SK-N-SH (cell line): ENCODE measurements at regions of chr1 and their contacts with region 1.

Region 1: DNA sequence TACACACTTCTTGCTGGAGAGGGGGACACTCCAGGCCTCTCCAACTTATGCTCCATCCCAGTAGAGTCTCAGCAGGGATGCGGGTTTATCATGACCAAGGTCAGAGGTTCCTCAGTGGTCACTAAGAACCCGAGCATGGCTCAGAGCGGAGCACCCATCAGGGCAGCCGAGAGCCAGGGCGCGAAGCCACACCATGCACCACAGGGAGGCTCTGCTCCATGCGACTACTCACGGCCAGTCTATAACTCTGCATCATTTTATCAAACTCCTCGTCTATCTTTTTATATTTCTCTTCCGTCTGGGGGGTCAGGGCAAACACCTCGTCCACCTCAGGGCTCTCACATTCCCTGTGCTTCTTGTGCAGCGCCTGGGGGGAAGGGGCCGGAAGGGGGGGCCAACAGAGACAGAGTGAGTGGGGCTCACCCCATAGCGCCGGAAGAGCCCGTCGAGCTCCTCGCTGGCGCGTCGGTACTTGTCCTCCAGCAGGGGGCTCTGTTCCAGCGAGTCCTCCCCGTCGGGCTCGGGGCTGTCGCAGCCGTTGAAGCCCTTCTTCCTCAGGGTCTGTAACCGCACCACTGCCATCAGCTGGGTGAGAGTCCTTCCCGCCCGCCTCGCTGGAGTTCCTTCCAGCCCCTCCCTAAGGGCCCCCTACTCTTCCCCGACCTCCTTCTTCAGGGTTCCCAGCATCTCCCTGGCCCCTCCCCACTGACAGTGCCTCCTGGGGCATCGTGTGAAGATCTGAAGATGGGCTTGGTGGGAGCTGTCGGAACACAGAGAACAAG is 20.0 kb downstream of the MEF2D start:
- DNase-seq: peak; percentile 84
- H3K4me3 ChIP-seq: peak overlapping the region in 1 of 2 experiments; percentile 35; a peak in 1 of 4 replicates
- H3K27ac ChIP-seq: no peak overlapping the region
- H3K4me1 ChIP-seq: peaks cover 0 to 5% of the 10 kb centered on the region in 2 experiments; a peak in 1 of 4 replicates
- H3K27me3 ChIP-seq: no peaks in the 10 kb centered on the region
- CTCF ChIP-seq: peak; percentile 70
- EP300 ChIP-seq: no peak
- RAD21 ChIP-seq: peak; percentile 52

Region 2: GRCh38 chr1:156193488-156194299 is 286.9 kb before region 1 on chr1 and contains the start of gene SLC25A44:
- CTCF ChIA-PET with region 1: no interaction called
- POLR2A ChIA-PET with region 1: no interaction called
- DNase-seq: peak; percentile 92
- H3K4me3 ChIP-seq: peak within 1 kb of the TSS; percentile 69 to 78
- H3K27ac ChIP-seq: peak within 1 kb of the TSS; percentile 67 to 92
- H3K4me1 ChIP-seq: peaks cover 7 to 16% of the 10 kb centered on the region in 2 experiments; a peak in 2 of 4 replicates
- H3K27me3 ChIP-seq: no peaks in the 10 kb centered on the region
- CTCF ChIP-seq: peak; percentile 21; the same call in 1 of the 2 replicates
- EP300 ChIP-seq: no peak
- RAD21 ChIP-seq: no peak
- polyA plus RNA-seq, gene SLC25A44: 28.5 and 40.2 TPM in 2 replicates

Region 3: DNA sequence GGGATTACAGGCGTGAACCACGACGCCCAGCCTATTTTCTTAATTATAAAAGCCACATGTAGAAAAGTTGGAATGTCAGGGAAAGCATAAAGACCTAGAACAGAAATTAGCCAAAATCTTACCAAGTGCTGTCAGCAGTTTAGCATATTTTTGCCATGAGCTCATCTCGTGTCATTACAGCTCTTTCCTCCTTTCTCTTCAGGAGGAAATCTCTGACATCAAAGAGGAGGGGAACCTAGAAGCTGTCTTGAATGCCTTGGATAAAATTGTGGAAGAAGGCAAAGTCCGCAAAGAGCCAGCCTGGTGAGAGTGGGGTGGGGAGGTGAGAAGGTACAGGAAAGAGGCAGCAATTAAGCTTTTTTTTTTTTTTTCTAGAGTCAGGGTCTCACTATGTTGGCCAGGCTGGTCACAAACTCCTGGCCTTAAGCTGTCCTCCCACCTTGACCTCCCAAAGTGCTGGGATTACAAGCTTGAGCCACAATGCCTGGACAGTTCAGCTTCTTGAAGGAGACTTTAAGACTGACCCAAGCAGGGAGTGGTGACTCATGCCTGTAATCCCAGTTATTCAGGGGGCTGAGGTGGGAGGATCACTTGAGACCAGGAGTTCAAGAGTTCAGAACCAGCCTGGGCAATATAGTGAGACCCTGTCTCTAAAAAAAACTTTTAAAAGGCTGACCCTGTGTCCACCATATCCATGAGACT is 247.0 kb before region 1 on chr1:
- CTCF ChIA-PET with region 1: no interaction called
- POLR2A ChIA-PET with region 1: no interaction called
- DNase-seq: no peak
- H3K4me3 ChIP-seq: no peak overlapping the region
- H3K27ac ChIP-seq: peak overlapping the region in 1 of 2 experiments; percentile 82; a peak in 2 of 4 replicates
- H3K4me1 ChIP-seq: peaks cover 0 to 11% of the 10 kb centered on the region in 2 experiments; a peak in 3 of 4 replicates
- H3K27me3 ChIP-seq: no peaks in the 10 kb centered on the region
- CTCF ChIP-seq: no peak
- EP300 ChIP-seq: no peak
- RAD21 ChIP-seq: no peak

Region 4: GRCh38 chr1:156394835-156395461 is 85.7 kb before region 1 on chr1:
- CTCF ChIA-PET with region 1: no interaction called
- POLR2A ChIA-PET with region 1: no interaction called
- DNase-seq: no peak
- H3K4me3 ChIP-seq: no peak overlapping the region
- H3K27ac ChIP-seq: no peak overlapping the region
- H3K4me1 ChIP-seq: peaks cover 0 to 6% of the 10 kb centered on the region in 2 experiments; a peak in 1 of 4 replicates
- H3K27me3 ChIP-seq: no peaks in the 10 kb centered on the region; the same call in 1 of the 2 replicates
- CTCF ChIP-seq: no peak
- EP300 ChIP-seq: no peak
- RAD21 ChIP-seq: no peak

Region 5: DNA sequence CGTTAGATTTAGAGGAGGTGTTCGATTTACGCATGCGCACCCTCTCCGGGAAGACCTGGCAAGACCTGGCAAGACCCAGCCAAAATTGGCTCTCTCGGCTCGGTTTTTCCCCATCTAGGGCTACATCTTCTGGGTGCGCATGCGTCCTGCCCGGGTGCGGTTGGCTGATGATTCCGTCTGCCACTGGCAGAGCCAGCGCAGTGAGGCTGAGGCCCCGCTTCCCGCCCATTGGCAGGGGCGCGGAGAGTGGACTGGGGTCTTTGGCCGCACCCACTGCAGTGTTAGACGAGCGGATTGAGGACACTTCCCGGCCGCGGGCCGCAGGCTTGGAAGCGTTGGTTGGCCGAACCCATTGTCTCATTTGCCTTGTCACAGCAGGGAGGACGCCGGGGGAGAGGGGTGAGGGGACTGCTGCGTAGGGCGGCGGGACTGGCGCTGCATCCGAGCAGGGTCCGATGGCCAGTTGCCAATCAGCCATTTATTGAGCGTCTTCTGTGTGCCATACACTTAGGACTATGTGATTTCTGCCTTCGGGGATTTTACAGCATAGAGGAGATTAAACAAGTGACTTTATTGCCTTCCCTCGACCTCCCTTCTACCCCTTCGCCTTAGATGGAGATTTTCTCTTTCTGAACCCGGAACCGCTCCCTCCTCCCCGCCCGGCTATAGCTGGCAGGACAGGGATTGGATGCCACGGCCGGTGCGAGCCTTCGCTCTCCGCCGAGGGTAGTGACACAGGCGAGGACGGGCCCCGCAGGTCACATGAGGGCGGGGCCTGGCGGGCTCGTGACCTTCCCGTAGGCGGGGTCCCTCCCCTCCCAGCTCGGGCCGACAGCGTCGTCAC is 23.8 kb before region 1 on chr1:
- CTCF ChIA-PET with region 1: interaction called, 14 read pairs
- POLR2A ChIA-PET with region 1: no interaction called
- DNase-seq: peak; percentile 96
- H3K4me3 ChIP-seq: peak overlapping the region; percentile 56 to 70
- H3K27ac ChIP-seq: peak overlapping the region; percentile 96 to 97
- H3K4me1 ChIP-seq: peaks cover 3 to 5% of the 10 kb centered on the region in 2 experiments; a peak in 2 of 4 replicates
- H3K27me3 ChIP-seq: no peaks in the 10 kb centered on the region
- CTCF ChIP-seq: no peak
- EP300 ChIP-seq: no peak
- RAD21 ChIP-seq: no peak

Region 6: GRCh38 chr1:156461781-156462647 is 18.6 kb before region 1 on chr1:
- CTCF ChIA-PET with region 1: interaction called, 14 read pairs
- POLR2A ChIA-PET with region 1: no interaction called
- DNase-seq: no peak
- H3K4me3 ChIP-seq: no peak overlapping the region
- H3K27ac ChIP-seq: no peak overlapping the region
- H3K4me1 ChIP-seq: peaks cover 0 to 13% of the 10 kb centered on the region in 2 experiments; a peak in 1 of 4 replicates
- H3K27me3 ChIP-seq: no peaks in the 10 kb centered on the region
- CTCF ChIP-seq: no peak
- EP300 ChIP-seq: no peak
- RAD21 ChIP-seq: no peak

Region 7: DNA sequence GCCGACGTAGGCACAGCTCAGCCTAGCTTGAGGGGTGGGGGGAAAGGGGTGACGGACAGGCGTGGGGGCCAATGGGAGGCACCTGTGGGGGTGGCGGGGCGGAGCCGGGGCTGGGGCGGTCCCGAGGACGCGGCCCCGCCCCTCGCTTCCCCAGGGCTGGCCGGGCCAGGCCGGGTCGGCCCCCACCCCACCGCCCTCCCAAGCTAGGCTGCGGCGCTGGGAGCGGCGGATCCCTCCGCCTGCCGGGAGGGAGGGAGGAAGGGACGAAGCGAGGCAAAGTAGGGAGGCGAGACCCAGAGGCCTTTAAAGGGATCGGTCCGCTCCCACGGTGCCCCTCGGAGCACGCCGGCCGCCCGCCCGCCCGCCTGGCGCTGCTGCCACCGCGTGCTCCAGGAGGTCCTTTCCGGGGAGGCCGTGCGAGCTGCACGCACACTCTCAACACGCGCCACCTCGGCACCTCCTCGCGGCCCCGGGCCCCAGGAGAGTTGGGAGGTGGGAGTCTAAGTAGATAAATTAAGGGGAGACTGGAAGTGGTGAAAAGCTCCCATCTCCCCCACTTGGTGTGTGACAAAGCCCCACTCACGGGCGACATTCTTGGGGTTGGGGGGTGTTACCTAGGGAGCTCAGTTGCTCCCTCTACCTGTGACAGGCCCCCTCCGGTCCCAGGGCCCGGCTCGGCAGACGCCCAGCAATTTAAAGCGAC is 20.3 kb after region 1 on chr1:
- CTCF ChIA-PET with region 1: interaction called, 47 read pairs
- POLR2A ChIA-PET with region 1: no interaction called
- DNase-seq: peak; percentile 99
- H3K4me3 ChIP-seq: peak overlapping the region; percentile 89 to 97
- H3K27ac ChIP-seq: peak overlapping the region; percentile 98 to 100
- H3K4me1 ChIP-seq: peaks cover 59 to 76% of the 10 kb centered on the region in 2 experiments
- H3K27me3 ChIP-seq: no peaks in the 10 kb centered on the region
- CTCF ChIP-seq: peak; percentile 59
- EP300 ChIP-seq: 0 out of 4 replicates have a peak, but pooled peaks of 1 of the 2 experiments have one; percentile 38
- RAD21 ChIP-seq: peak; percentile 35

Region 8: DNA sequence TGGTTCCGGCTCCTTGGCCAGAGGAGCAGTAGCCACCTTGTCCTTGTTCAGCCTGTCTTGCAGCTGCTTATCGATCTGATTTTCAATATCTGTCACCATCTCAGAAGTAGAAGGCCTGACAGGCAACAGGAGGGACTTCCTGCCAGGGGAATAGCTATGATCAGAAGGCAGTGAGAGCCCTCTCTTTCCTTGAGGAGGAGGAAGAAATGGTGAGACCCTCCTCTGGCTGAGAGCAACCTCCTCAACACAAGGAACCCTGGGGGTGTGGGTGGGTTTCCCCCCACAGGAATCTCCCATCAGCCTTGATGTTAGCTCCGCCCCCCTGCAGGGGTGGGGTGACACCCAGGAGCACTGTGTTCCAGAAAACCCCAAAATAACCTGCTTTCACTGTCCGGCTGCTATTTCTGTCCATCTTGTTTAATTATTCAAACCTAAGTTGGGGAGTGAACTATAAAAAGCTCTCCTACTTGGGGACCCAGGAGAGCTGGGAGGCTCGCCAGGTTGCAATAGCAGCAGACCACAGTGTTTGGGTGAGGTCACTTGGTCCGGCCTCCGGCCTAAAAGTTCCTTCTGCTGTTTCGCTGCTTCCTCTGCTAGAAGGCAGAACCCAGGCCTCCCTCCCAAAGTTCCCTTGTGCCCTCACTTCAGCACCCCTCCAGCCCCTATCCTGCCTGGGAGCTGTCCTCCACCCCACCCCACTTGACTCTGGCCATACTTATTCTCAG is 27.7 kb after region 1 on chr1:
- CTCF ChIA-PET with region 1: interaction called, 10 read pairs
- POLR2A ChIA-PET with region 1: no interaction called
- DNase-seq: no peak
- H3K4me3 ChIP-seq: no peak overlapping the region
- H3K27ac ChIP-seq: no peak overlapping the region
- H3K4me1 ChIP-seq: peaks cover 22 to 25% of the 10 kb centered on the region in 2 experiments
- H3K27me3 ChIP-seq: no peaks in the 10 kb centered on the region
- CTCF ChIP-seq: no peak
- EP300 ChIP-seq: no peak
- RAD21 ChIP-seq: no peak